WTC11 (cell line): ENCODE measurements at regions of chr12 and their contacts with region 1.

Region 1: GRCh38 chr12:47812797-47813510 is 6.7 kb downstream of the HDAC7 start:
- DNase-seq: peak; percentile 87
- ATAC-seq: peak; percentile 68
- H3K4me3 Mint-ChIP-seq: peak overlapping the region; percentile 60
- H3K27ac Mint-ChIP-seq: peak overlapping the region; percentile 98
- H3K4me1 Mint-ChIP-seq: peaks cover 83% of the 10 kb centered on the region
- H3K27me3 Mint-ChIP-seq: no peaks in the 10 kb centered on the region
- CTCF ChIP-seq: no peak

Region 2: DNA sequence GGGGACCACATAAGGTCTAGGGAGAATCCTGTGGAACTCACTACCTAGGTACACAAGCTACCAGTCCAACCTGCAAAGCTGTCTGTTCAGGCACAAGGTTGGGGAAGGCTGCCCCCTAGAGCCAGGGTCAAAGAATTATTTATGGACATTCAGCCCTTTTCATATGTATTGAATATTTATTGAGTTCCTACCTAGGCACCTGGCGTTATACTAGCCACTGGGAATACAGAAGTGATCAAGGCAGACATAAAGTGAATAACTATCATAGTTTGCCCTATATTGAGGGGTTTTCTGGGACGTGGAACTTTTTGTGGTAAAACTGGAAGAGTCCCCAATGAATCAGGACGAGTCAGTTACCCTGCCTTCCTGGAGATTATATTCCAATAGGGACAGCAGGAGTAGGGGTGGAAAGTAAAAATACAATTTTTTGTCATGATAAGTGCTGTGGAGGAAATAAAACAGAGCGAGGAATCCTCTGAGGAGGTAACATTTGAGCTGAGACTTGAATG is 45.7 kb before region 1 on chr12:
- CTCF ChIA-PET with region 1: interaction called, 17 read pairs
- POLR2A ChIA-PET with region 1: interaction called, 5 read pairs
- DNase-seq: peak; percentile 76
- ATAC-seq: peak; percentile 61
- H3K4me3 Mint-ChIP-seq: no peak overlapping the region
- H3K27ac Mint-ChIP-seq: no peak overlapping the region
- H3K4me1 Mint-ChIP-seq: peaks cover 18% of the 10 kb centered on the region
- H3K27me3 Mint-ChIP-seq: peaks cover 6% of the 10 kb centered on the region
- CTCF ChIP-seq: peak; percentile 51; the same call in 1 of the 2 replicates

Region 3: DNA sequence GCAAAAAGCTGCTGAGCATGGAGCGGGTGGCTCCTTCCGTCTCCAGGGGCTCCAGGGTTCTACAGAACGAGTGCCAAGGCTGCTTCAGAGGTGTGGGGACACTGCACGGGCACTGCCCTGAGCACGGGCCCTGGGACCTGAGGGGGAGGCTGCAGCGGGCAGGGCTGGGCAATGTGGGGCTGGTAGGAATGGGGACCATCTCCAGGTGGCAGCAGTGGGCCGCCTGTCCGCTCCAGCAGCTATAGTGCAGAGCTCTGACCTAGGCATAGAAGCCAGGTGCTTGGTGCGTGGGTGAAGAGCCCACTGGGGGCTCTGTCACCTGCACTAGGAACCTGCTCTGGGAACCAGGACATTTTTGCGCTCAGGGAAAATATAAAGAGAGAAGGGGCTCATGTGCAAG is 15.5 kb before region 1 on chr12:
- CTCF ChIA-PET with region 1: interaction called, 81 read pairs
- POLR2A ChIA-PET with region 1: interaction called, 4 read pairs
- DNase-seq: peak; percentile 69
- ATAC-seq: peak; percentile 83
- H3K4me3 Mint-ChIP-seq: no peak overlapping the region
- H3K27ac Mint-ChIP-seq: no peak overlapping the region; the same call in 1 of the 2 replicates
- H3K4me1 Mint-ChIP-seq: peaks cover 28% of the 10 kb centered on the region
- H3K27me3 Mint-ChIP-seq: no peaks in the 10 kb centered on the region
- CTCF ChIP-seq: 0 out of 2 replicates have a peak, but pooled peaks have one; percentile 27

Region 4: DNA sequence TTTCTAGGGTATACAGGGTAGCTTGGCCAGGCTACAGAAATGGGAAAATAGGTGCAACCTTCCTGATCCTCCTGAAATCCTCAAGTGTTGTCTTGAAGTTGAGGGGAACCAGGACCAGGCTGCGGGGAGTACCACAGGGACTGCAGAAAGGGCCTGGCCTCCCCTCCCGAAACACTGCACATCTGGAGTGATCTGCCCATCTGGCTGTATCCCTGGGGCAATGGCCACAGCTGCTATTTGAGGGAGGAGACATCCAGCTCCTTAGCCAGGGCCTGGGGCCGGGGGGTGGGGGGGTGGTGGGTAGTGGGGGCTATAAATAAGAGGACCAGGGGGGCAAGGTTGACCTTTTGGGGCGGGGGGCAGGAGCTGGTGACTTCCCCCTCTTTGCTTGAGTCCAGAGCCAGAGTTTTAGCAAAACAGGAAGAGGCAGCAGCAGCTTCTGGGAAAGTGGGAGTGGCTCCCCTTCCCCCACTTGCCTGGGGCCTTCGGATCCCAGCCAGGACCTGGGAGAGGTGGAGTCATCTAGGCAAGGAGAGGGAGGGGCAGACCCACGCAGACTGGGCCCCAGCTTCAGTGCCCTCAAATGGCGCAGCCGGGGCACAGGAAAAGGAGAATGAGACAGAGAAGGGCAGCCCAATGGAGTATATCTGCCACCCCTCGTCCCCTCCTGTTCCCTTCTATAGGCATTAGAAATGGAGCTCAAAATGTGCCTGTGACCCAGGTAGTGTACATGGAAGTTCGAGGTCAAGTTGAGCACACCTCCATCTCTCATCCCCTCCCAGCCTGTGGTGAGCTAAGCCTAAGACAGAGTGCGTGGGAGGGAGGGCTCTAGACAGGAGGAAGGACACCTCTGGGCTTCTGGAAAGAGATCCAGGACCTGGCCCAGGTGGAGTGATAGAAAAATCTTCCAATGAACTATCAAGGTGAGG is 15.9 kb after region 1 on chr12:
- CTCF ChIA-PET with region 1: interaction called, 16 read pairs
- POLR2A ChIA-PET with region 1: interaction called, 14 read pairs
- DNase-seq: peak; percentile 58
- ATAC-seq: peak; percentile 84
- H3K4me3 Mint-ChIP-seq: 0 out of 2 replicates have a peak overlapping the region, but pooled peaks have one; percentile 14
- H3K27ac Mint-ChIP-seq: no peak overlapping the region
- H3K4me1 Mint-ChIP-seq: peaks cover 37% of the 10 kb centered on the region
- H3K27me3 Mint-ChIP-seq: peaks cover 4% of the 10 kb centered on the region; the same call in 1 of the 2 replicates
- CTCF ChIP-seq: no peak